ENCODE measurements at regions of chrX and their contacts with region 1.

Region 1: DNA sequence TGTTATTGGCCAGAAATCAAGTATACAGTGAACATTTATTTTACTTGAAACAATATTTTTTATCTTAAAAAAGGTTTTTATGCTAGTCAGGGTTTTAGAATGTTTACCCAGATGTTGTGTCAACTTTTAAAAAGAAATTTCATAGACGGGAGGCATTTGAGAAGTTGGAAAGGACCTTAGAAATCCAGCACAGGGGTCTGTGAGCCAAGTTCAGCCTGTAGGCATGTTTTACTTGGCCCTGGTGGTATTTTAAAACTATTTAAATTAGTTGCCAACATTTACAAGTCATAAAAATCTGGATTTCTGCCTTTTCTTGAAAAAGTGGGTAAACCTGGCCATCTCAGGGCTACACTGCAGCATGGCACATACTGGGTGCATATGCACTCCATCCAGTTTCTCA is 25.5 kb upstream of the FHL1 start:
- DNase-seq: no peak
- H3K4me3 ChIP-seq: no peak overlapping the region
- H3K27ac ChIP-seq: no peak overlapping the region
- H3K4me1 ChIP-seq: no peaks in the 10 kb centered on the region
- H3K27me3 ChIP-seq: no peaks in the 10 kb centered on the region
- CTCF ChIP-seq: no peak
- POLR2A ChIP-seq: no peak

Region 2: GRCh38 chrX:136063340-136064079 is 58.3 kb before region 1 on chrX:
- intact Hi-C with region 1: loop called (anchors 5 kb)
- DNase-seq: no peak
- H3K4me3 ChIP-seq: no peak overlapping the region
- H3K27ac ChIP-seq: peak overlapping the region; percentile 48
- H3K4me1 ChIP-seq: no peaks in the 10 kb centered on the region
- H3K27me3 ChIP-seq: no peaks in the 10 kb centered on the region
- CTCF ChIP-seq: no peak
- POLR2A ChIP-seq: no peak

Region 3: DNA sequence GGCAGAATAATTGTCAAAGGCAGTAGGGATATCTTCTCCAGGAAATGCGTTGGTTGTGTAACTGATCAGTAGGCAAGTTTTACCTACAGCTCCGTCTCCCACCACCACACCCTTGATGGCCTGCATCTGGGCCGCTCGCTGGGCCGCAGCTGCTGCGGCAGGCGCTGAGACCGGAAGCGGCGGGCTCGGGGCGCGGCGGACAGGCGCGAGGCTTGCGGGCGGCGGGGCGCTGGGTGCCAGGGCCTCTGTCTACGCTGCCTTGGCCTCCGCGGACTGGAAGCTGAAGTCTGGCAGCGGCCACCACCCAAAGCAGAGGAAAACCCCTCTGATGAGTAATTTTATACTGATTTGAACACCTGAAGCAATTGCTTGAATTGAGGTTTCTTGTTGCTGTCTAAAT is 1319.9 kb after region 1 on chrX:
- intact Hi-C with region 1: no loop called
- DNase-seq: no peak
- H3K4me3 ChIP-seq: no peak overlapping the region
- H3K27ac ChIP-seq: no peak overlapping the region
- H3K4me1 ChIP-seq: no peaks in the 10 kb centered on the region
- H3K27me3 ChIP-seq: no peaks in the 10 kb centered on the region
- CTCF ChIP-seq: no peak
- POLR2A ChIP-seq: no peak